GM12878 (cell line): ENCODE measurements at regions of chr3 and their contacts with region 1.

Region 1: DNA sequence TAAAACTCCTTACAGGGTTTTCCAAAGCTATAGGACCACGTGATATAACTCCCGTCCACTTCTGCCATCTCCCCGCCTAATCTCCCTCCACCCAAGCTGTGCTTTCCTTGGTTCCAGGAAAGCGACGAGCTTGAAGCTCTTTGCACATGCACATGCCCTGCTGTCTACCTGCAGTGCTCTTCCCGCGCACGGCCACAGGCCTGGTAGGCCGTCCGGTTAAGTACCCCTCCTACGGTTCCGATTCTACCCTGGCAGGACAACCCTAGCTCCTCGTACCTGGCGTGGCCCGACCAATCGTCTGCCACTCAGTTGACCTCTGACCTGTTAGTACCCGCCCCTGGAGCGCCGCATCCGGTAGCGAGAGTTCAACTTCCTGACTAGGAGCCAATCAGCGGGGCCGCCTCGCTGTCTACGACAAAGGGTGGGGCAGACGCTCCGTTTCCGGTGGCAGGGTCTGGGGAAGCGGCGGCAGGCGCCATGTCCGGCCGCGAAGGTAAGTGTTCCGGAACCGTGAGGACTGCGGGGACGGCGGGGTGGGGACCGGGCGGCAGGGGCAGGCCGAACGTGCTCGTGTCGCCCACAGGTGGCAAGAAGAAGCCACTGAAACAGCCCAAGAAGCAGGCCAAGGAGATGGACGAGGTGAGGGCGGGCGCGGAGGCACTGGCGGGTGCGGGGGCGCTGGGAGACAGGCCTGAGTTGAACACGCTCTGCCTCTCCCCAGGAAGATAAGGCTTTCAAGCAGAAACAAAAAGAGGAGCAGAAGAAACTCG is at the starts of genes CCDC51 and TMA7:
- DNase-seq: peak; percentile 93
- ATAC-seq: peak; percentile 96
- H3K4me3 ChIP-seq: peak within 1 kb of the TSS; percentile 89
- H3K27ac ChIP-seq: peak within 1 kb of the TSS; percentile 86
- H3K4me1 ChIP-seq: peaks cover 19% of the 10 kb centered on the region
- H3K27me3 ChIP-seq: no peaks in the 10 kb centered on the region
- CTCF ChIP-seq: 0 out of 6 replicates have a peak, but pooled peaks of 1 of the 3 experiments have one; percentile 5
- EP300 ChIP-seq: no peak
- POLR2A ChIP-seq: peak; percentile 97
- RAD21 ChIP-seq: no peak
- polyA plus RNA-seq, gene CCDC51: 10.6 to 12.6 TPM
- polyA plus RNA-seq, gene TMA7: 1,729 to 1,760 TPM

Region 2: GRCh38 chr3:47634996-47635395 is 805.0 kb before region 1 on chr3:
- CTCF ChIA-PET with region 1: no interaction called
- POLR2A ChIA-PET with region 1: no interaction called
- RAD21 ChIA-PET with region 1: no interaction called
- SMC1A ChIA-PET with region 1: no interaction called
- in situ Hi-C with region 1: no loop called
- intact Hi-C with region 1: no loop called
- DNase-seq: no peak
- ATAC-seq: peak; percentile 76
- H3K4me3 ChIP-seq: no peak overlapping the region
- H3K27ac ChIP-seq: no peak overlapping the region
- H3K4me1 ChIP-seq: no peaks in the 10 kb centered on the region
- H3K27me3 ChIP-seq: no peaks in the 10 kb centered on the region
- CTCF ChIP-seq: no peak
- EP300 ChIP-seq: no peak
- POLR2A ChIP-seq: no peak
- RAD21 ChIP-seq: no peak

Region 3: GRCh38 chr3:48194446-48195071 is 245.4 kb before region 1 on chr3:
- CTCF ChIA-PET with region 1: interaction called, 85 read pairs
- POLR2A ChIA-PET with region 1: interaction called, 5 read pairs
- RAD21 ChIA-PET with region 1: interaction called, 66 read pairs
- SMC1A ChIA-PET with region 1: interaction called, 31 read pairs
- in situ Hi-C with region 1: no loop called
- intact Hi-C with region 1: no loop called
- DNase-seq: peak; percentile 23
- ATAC-seq: peak; percentile 59
- H3K4me3 ChIP-seq: no peak overlapping the region
- H3K27ac ChIP-seq: no peak overlapping the region
- H3K4me1 ChIP-seq: no peaks in the 10 kb centered on the region
- H3K27me3 ChIP-seq: no peaks in the 10 kb centered on the region
- CTCF ChIP-seq: peak; percentile 77 to 79 (median 79); a peak in 5 of 6 replicates
- EP300 ChIP-seq: no peak
- POLR2A ChIP-seq: no peak
- RAD21 ChIP-seq: peak; percentile 87

Region 4: GRCh38 chr3:48247401-48247811 is 192.6 kb before region 1 on chr3:
- CTCF ChIA-PET with region 1: interaction called, 32 read pairs
- POLR2A ChIA-PET with region 1: interaction called, 6 read pairs
- RAD21 ChIA-PET with region 1: interaction called, 21 read pairs
- SMC1A ChIA-PET with region 1: interaction called, 22 read pairs
- in situ Hi-C with region 1: no loop called
- intact Hi-C with region 1: no loop called
- DNase-seq: no peak
- ATAC-seq: peak; percentile 56
- H3K4me3 ChIP-seq: no peak overlapping the region
- H3K27ac ChIP-seq: no peak overlapping the region
- H3K4me1 ChIP-seq: peaks cover 5% of the 10 kb centered on the region; the same call in 1 of the 2 replicates
- H3K27me3 ChIP-seq: no peaks in the 10 kb centered on the region
- CTCF ChIP-seq: no peak
- EP300 ChIP-seq: no peak
- POLR2A ChIP-seq: no peak
- RAD21 ChIP-seq: no peak

Region 5: GRCh38 chr3:48301020-48301796 is 138.8 kb before region 1 on chr3:
- CTCF ChIA-PET with region 1: interaction called, 31 read pairs
- POLR2A ChIA-PET with region 1: interaction called, 9 read pairs
- RAD21 ChIA-PET with region 1: interaction called, 11 read pairs
- SMC1A ChIA-PET with region 1: interaction called, 16 read pairs
- in situ Hi-C with region 1: no loop called
- intact Hi-C with region 1: no loop called
- DNase-seq: peak; percentile 74
- ATAC-seq: peak; percentile 82
- H3K4me3 ChIP-seq: peak within 1 kb of the TSS; percentile 89
- H3K27ac ChIP-seq: peak within 1 kb of the TSS; percentile 95
- H3K4me1 ChIP-seq: peaks cover 12% of the 10 kb centered on the region
- H3K27me3 ChIP-seq: no peaks in the 10 kb centered on the region
- CTCF ChIP-seq: no peak
- EP300 ChIP-seq: no peak
- POLR2A ChIP-seq: peak; percentile 93
- RAD21 ChIP-seq: no peak

Region 6: GRCh38 chr3:48408823-48409281 is 31.2 kb before region 1 on chr3:
- CTCF ChIA-PET with region 1: interaction called, 757 read pairs
- POLR2A ChIA-PET with region 1: interaction called, 5 read pairs
- RAD21 ChIA-PET with region 1: interaction called, 259 read pairs
- SMC1A ChIA-PET with region 1: interaction called, 287 read pairs
- in situ Hi-C with region 1: loop called (anchors 5 kb)
- intact Hi-C with region 1: no loop called
- DNase-seq: no peak
- ATAC-seq: no peak
- H3K4me3 ChIP-seq: no peak overlapping the region
- H3K27ac ChIP-seq: no peak overlapping the region
- H3K4me1 ChIP-seq: no peaks in the 10 kb centered on the region
- H3K27me3 ChIP-seq: no peaks in the 10 kb centered on the region
- CTCF ChIP-seq: peak; percentile 7 to 20 (median 9); a peak in 3 of 6 replicates
- EP300 ChIP-seq: no peak
- POLR2A ChIP-seq: no peak
- RAD21 ChIP-seq: no peak

Region 7: GRCh38 chr3:48465531-48466378 is 25.8 kb after region 1 on chr3:
- CTCF ChIA-PET with region 1: interaction called, 21 read pairs
- POLR2A ChIA-PET with region 1: interaction called, 7 read pairs
- RAD21 ChIA-PET with region 1: interaction called, 10 read pairs
- SMC1A ChIA-PET with region 1: interaction called, 6 read pairs
- in situ Hi-C with region 1: no loop called
- intact Hi-C with region 1: no loop called
- DNase-seq: no peak
- ATAC-seq: peak; percentile 94
- H3K4me3 ChIP-seq: peak overlapping the region; percentile 88
- H3K27ac ChIP-seq: peak overlapping the region; percentile 96
- H3K4me1 ChIP-seq: peaks cover 41% of the 10 kb centered on the region
- H3K27me3 ChIP-seq: no peaks in the 10 kb centered on the region
- CTCF ChIP-seq: peak; percentile 52 to 67 (median 56); a peak in 5 of 6 replicates
- EP300 ChIP-seq: no peak
- POLR2A ChIP-seq: peak; percentile 98
- RAD21 ChIP-seq: peak; percentile 64

Region 8: GRCh38 chr3:48556793-48557626 is 117.0 kb after region 1 on chr3 and contains the start of gene PFKFB4:
- CTCF ChIA-PET with region 1: interaction called, 239 read pairs
- POLR2A ChIA-PET with region 1: interaction called, 11 read pairs
- RAD21 ChIA-PET with region 1: interaction called, 37 read pairs
- SMC1A ChIA-PET with region 1: interaction called, 28 read pairs
- in situ Hi-C with region 1: no loop called
- intact Hi-C with region 1: loop called (anchors 5 kb)
- DNase-seq: peak; percentile 99
- ATAC-seq: peak; percentile 93
- H3K4me3 ChIP-seq: peak within 1 kb of the TSS; percentile 91
- H3K27ac ChIP-seq: peak within 1 kb of the TSS; percentile 78
- H3K4me1 ChIP-seq: peaks cover 47% of the 10 kb centered on the region
- H3K27me3 ChIP-seq: no peaks in the 10 kb centered on the region
- CTCF ChIP-seq: peak in 1 of 3 experiments; percentile 11; a peak in 2 of 6 replicates
- EP300 ChIP-seq: no peak; a peak in 1 of 4 replicates
- POLR2A ChIP-seq: peak; percentile 77
- RAD21 ChIP-seq: no peak
- polyA plus RNA-seq, gene PFKFB4: 0.37 to 0.53 TPM